Activated naive CD8-positive, alpha-beta T cell treated with anti-CD3 and anti-CD28 coated beads, Interleukin-2, amount 10 ng/mL, durations not matched to agents 7 days and 5 days (primary cell): ENCODE measurements at regions of chr6 and their contacts with region 1.

Region 1: GRCh38 chr6:37516076-37516919 is 16.6 kb upstream of the CCDC167 start:
- DNase-seq: peak; percentile 76
- ATAC-seq: peak; percentile 86
- H3K4me3 Mint-ChIP-seq: peak overlapping the region; percentile 86
- H3K27ac Mint-ChIP-seq: peak overlapping the region; percentile 99
- H3K4me1 Mint-ChIP-seq: peaks cover 59% of the 10 kb centered on the region
- H3K27me3 Mint-ChIP-seq: no peaks in the 10 kb centered on the region

Region 2: DNA sequence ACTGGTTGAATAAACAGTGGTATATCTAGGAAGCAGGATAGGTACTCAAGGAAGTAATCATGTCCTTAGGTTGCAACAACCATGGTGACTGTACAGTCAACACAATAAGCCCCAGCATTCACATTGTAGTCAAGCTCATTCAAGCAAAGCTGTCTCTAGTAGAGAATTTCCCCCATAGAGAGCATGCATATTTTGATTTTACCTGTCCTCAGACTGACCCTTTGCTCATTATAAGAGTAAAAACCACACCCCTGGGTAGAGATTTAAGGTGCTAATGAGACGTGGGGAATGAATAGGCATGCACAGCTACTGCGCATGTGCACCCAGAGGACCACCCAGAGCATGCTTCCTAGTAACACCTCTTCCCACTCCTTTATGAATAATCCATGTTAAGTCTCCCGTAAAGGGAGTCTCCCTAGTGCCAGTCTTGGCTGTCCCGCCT is 168.6 kb before region 1 on chr6:
- POLR2A ChIA-PET with region 1: no interaction called
- DNase-seq: no peak
- ATAC-seq: no peak
- H3K4me3 Mint-ChIP-seq: no peak overlapping the region
- H3K27ac Mint-ChIP-seq: no peak overlapping the region
- H3K4me1 Mint-ChIP-seq: peaks cover 10% of the 10 kb centered on the region
- H3K27me3 Mint-ChIP-seq: peaks cover 35% of the 10 kb centered on the region

Region 3: GRCh38 chr6:37491171-37491829 is 25.0 kb before region 1 on chr6:
- POLR2A ChIA-PET with region 1: interaction called, 182 read pairs
- DNase-seq: peak; percentile 24
- ATAC-seq: no peak
- H3K4me3 Mint-ChIP-seq: no peak overlapping the region
- H3K27ac Mint-ChIP-seq: no peak overlapping the region
- H3K4me1 Mint-ChIP-seq: peaks cover 26% of the 10 kb centered on the region
- H3K27me3 Mint-ChIP-seq: no peaks in the 10 kb centered on the region

Region 4: DNA sequence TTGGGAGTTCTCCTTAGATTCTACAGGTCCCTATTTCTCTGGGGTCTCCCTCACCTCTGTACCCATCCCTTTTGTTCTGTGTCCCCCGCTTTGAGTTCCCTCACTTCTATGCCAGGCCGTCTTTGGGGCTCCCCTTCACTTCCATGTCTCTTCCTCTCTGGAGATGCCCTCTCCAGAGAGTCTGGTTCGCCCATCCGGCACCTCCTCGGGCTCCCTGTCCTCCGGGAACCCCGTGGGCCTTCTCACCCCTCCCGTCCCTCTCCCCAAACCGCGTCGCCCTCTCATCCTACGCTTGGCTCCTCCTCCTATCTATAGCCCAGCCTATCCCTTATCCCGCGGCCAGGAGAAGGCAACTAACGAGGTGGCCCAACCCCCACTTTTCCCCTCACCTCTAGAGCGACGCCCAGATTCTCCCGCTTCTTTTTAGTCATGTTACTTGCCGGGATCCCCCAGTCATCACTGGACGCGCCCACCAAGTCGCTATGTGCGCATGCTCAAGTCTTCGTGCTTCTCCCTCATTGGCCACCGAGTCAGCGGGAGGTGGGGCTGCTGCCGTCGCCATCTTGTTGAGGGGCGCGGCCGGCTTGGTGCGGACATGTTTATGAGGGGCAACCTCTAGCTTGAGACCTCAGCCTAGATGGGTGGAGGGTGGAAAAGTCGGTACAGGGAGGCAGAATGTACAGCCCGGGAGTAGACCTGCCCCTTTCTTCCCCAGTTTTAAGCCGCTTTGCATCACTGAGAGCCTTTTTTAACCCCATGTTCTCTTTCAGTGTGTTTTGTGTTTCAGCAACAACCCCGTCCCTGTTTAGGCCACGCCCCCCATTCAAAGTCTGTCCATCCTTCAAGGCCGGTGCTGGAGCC is 16.6 kb before region 1 on chr6 and contains the start of gene CCDC167:
- POLR2A ChIA-PET with region 1: interaction called, 182 read pairs
- DNase-seq: peak; percentile 93
- ATAC-seq: peak; percentile 94
- H3K4me3 Mint-ChIP-seq: peak within 1 kb of the TSS; percentile 97
- H3K27ac Mint-ChIP-seq: peak within 1 kb of the TSS; percentile 97
- H3K4me1 Mint-ChIP-seq: peaks cover 58% of the 10 kb centered on the region
- H3K27me3 Mint-ChIP-seq: no peaks in the 10 kb centered on the region
- total RNA-seq, gene CCDC167: 48.5 to 54.2 TPM